ENCODE measurements at regions of chr22 and their contacts with region 1.

Region 1: DNA sequence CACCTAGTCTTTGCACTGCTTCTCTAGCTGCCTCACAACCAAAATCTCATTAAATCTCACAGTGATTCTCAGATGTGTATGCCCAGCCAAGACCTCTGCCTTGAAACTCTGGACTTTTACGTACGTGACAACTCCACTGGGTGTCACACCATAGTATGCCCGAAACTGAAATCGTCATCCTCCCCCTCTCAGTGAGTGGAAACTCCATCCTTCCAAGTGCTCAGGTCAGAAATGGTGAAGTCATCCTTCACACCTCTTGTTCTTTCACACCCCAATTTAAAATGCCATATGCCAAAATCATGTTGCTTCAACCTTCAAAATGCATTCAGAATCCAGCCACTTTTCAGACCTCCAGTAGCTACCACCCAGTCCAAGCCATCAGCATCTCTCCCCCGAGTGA is 42.5 kb downstream of the SFI1 start:
- DNase-seq: no peak
- H3K4me3 ChIP-seq: no peak overlapping the region
- H3K4me3 Mint-ChIP-seq: no peak overlapping the region
- H3K27ac ChIP-seq: no peak overlapping the region
- H3K27ac Mint-ChIP-seq: no peak overlapping the region
- H3K4me1 ChIP-seq: no peaks in the 10 kb centered on the region
- H3K4me1 Mint-ChIP-seq: no peaks in the 10 kb centered on the region
- H3K27me3 ChIP-seq: no peaks in the 10 kb centered on the region
- H3K27me3 Mint-ChIP-seq: peaks cover 0 to 5% (median 2%) of the 10 kb centered on the region in 3 donors
- CTCF ChIP-seq: no peak

Region 2: DNA sequence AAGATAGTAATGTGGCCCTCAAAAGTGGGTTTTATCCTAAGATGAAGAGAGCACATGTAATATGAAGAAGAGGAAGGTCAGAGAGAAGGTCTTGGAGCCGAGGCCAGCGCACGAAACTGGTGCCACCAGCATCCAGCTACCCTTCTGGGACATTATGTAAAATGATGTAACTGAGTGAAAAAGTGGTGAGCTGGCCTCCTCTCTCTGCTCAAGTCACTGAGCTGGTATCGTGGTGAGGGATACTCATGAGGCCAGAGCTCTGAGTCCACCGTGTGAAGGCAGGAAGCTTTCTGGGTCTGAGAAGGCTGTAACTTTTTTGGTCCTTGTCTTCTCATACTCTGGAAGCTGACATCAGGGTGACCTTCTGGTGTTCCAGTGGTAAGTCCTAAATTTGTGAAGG is 353.8 kb before region 1 on chr22:
- intact Hi-C with region 1: no loop called
- DNase-seq: no peak
- H3K4me3 ChIP-seq: no peak overlapping the region
- H3K4me3 Mint-ChIP-seq: no peak overlapping the region
- H3K27ac ChIP-seq: no peak overlapping the region
- H3K27ac Mint-ChIP-seq: peak overlapping the region in 2 of 7 donors; percentile 57 to 77
- H3K4me1 ChIP-seq: no peaks in the 10 kb centered on the region
- H3K4me1 Mint-ChIP-seq: no peaks in the 10 kb centered on the region
- H3K27me3 ChIP-seq: no peaks in the 10 kb centered on the region
- H3K27me3 Mint-ChIP-seq: no peaks in the 10 kb centered on the region
- CTCF ChIP-seq: no peak

Region 3: GRCh38 chr22:31561238-31561887 is 22.5 kb after region 1 on chr22:
- intact Hi-C with region 1: loop called in 1 of 2 experiments (anchors 2 kb)
- DNase-seq: peak; percentile 6 to 31 (median 11)
- H3K4me3 ChIP-seq: no peak overlapping the region
- H3K4me3 Mint-ChIP-seq: no peak overlapping the region
- H3K27ac ChIP-seq: no peak overlapping the region
- H3K27ac Mint-ChIP-seq: peak overlapping the region in 2 of 7 donors; percentile 25 to 32
- H3K4me1 ChIP-seq: no peaks in the 10 kb centered on the region
- H3K4me1 Mint-ChIP-seq: no peaks in the 10 kb centered on the region
- H3K27me3 ChIP-seq: no peaks in the 10 kb centered on the region
- H3K27me3 Mint-ChIP-seq: peaks cover 0 to 1% (median 0%) of the 10 kb centered on the region in 3 donors
- CTCF ChIP-seq: peak; percentile 56

Measured in CD14-positive monocyte (primary cell).